ENCODE measurements at regions of chr7 and their contacts with region 1.

Region 1: DNA sequence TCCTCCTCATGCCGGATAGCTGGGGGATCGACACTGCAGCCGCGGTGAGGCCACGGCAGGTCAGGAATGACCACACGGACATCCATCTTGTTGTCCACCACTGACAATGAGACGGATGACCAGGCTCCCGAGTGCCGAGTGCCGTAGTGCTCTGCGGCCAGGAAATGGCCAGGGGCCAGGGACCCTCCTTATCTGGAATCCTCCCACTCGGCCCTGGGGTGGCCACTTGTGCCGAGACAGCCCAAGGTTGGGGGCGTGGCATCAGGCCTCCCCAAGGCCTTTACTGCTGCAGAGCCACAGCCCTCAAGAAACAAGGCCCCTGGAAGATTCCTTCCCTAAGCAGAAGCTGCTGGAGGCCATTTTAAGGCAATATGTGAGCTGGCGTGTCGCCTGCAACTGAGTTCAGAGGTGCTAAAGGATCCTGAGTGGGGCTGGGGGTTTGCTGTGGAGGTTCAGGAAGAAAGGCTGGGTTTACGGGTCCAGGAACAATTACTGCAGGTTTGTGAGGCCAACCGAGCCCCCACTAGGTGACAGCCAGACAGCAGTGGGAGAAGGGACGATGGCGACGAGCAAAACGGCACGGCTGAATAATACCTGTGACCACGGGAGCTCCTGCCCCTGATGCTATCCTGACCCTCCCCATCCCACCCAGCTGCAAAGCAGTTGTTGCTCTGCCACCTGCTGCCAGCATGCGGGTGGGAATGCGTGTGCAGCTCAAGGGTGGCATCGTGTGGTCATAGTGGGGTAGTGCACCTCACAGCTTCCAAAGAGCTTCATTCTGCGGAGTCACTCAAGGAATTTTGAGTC is 31.6 kb upstream of the LEP start:
- DNase-seq: peak; percentile 58 to 66 (median 63)
- H3K4me3 ChIP-seq: no peak overlapping the region
- H3K4me3 Mint-ChIP-seq: no peak overlapping the region
- H3K27ac ChIP-seq: no peak overlapping the region
- H3K27ac Mint-ChIP-seq: no peak overlapping the region
- H3K4me1 ChIP-seq: no peaks in the 10 kb centered on the region
- H3K4me1 Mint-ChIP-seq: peaks cover 0 to 1% (median 0%) of the 10 kb centered on the region in 4 donors
- H3K27me3 ChIP-seq: no peaks in the 10 kb centered on the region
- H3K27me3 Mint-ChIP-seq: peaks cover 13 to 21% of the 10 kb centered on the region in 2 donors

Region 2: DNA sequence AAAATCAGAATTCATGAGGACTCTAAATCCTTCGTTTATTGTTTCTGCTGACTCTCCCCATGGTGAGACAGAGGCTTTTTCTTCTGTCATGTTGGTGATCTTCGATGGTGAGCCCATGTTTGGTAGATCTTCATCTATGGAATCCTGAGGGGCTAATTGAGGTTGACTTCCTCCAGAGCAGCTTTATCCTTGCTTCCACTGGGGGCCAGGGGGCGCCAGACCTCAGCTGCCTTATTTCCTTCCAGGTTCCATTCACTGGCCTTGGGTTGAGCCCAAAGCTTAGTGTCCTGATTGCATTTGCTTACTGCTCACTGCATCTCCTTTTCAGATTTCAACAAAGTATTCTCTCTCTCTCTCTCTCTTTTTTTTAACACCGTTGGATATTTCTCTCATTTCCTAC is 704.7 kb before region 1 on chr7:
- CTCF ChIA-PET with region 1: interaction called, 14 read pairs
- POLR2A ChIA-PET with region 1: no interaction called
- intact Hi-C with region 1: no loop called
- DNase-seq: peak in 1 of 5 donors; percentile 1
- H3K4me3 ChIP-seq: no peak overlapping the region
- H3K4me3 Mint-ChIP-seq: no peak overlapping the region
- H3K27ac ChIP-seq: no peak overlapping the region
- H3K27ac Mint-ChIP-seq: no peak overlapping the region
- H3K4me1 ChIP-seq: no peaks in the 10 kb centered on the region
- H3K4me1 Mint-ChIP-seq: no peaks in the 10 kb centered on the region
- H3K27me3 ChIP-seq: no peaks in the 10 kb centered on the region
- H3K27me3 Mint-ChIP-seq: peaks cover 17 to 28% of the 10 kb centered on the region in 2 donors

Region 3: GRCh38 chr7:127717502-127718339 is 491.7 kb before region 1 on chr7:
- CTCF ChIA-PET with region 1: interaction called, 267 read pairs
- POLR2A ChIA-PET with region 1: no interaction called
- intact Hi-C with region 1: no loop called
- DNase-seq: no peak
- H3K4me3 ChIP-seq: no peak overlapping the region
- H3K4me3 Mint-ChIP-seq: peak overlapping the region in 1 of 8 donors; percentile 7
- H3K27ac ChIP-seq: no peak overlapping the region
- H3K27ac Mint-ChIP-seq: peak overlapping the region in 4 of 7 donors; percentile 1 to 32 (median 18)
- H3K4me1 ChIP-seq: no peaks in the 10 kb centered on the region
- H3K4me1 Mint-ChIP-seq: peaks cover 10 to 22% (median 14%) of the 10 kb centered on the region in 4 donors
- H3K27me3 ChIP-seq: no peaks in the 10 kb centered on the region
- H3K27me3 Mint-ChIP-seq: no peaks in the 10 kb centered on the region

Region 4: GRCh38 chr7:128191136-128191844 is 18.1 kb before region 1 on chr7:
- CTCF ChIA-PET with region 1: interaction called, 11 read pairs
- POLR2A ChIA-PET with region 1: interaction called, 3 read pairs
- intact Hi-C with region 1: no loop called
- DNase-seq: no peak
- H3K4me3 ChIP-seq: no peak overlapping the region
- H3K4me3 Mint-ChIP-seq: no peak overlapping the region
- H3K27ac ChIP-seq: no peak overlapping the region
- H3K27ac Mint-ChIP-seq: no peak overlapping the region
- H3K4me1 ChIP-seq: no peaks in the 10 kb centered on the region
- H3K4me1 Mint-ChIP-seq: no peaks in the 10 kb centered on the region
- H3K27me3 ChIP-seq: peaks cover 4% of the 10 kb centered on the region
- H3K27me3 Mint-ChIP-seq: peaks cover 19 to 32% of the 10 kb centered on the region in 2 donors

Region 5: GRCh38 chr7:128221929-128222403 is 12.5 kb after region 1 on chr7:
- CTCF ChIA-PET with region 1: interaction called, 41 read pairs
- POLR2A ChIA-PET with region 1: no interaction called
- intact Hi-C with region 1: no loop called
- DNase-seq: no peak
- H3K4me3 ChIP-seq: no peak overlapping the region
- H3K4me3 Mint-ChIP-seq: no peak overlapping the region
- H3K27ac ChIP-seq: no peak overlapping the region
- H3K27ac Mint-ChIP-seq: no peak overlapping the region
- H3K4me1 ChIP-seq: no peaks in the 10 kb centered on the region
- H3K4me1 Mint-ChIP-seq: no peaks in the 10 kb centered on the region
- H3K27me3 ChIP-seq: no peaks in the 10 kb centered on the region
- H3K27me3 Mint-ChIP-seq: peaks cover 13 to 27% of the 10 kb centered on the region in 2 donors